Heart left ventricle (tissue), 16 donors: ENCODE measurements at regions of chr21 and their contacts with region 1.

Region 1: GRCh38 chr21:42220138-42220701 is 1.3 kb downstream of the ABCG1 start:
- DNase-seq: peak in 4 of 5 donors; percentile 56 to 74 (median 70)
- ATAC-seq: peak; percentile 70 to 86 (median 74)
- H3K4me3 ChIP-seq: peak overlapping the region; percentile 49 to 95 (median 78)
- H3K27ac ChIP-seq: peak overlapping the region; percentile 44 to 90 (median 83)
- H3K4me1 ChIP-seq: peaks cover 7 to 48% (median 28%) of the 10 kb centered on the region in 12 donors
- H3K27me3 ChIP-seq: no peaks in the 10 kb centered on the region
- CTCF ChIP-seq: no peak
- POLR2A ChIP-seq: no peak

Region 2: DNA sequence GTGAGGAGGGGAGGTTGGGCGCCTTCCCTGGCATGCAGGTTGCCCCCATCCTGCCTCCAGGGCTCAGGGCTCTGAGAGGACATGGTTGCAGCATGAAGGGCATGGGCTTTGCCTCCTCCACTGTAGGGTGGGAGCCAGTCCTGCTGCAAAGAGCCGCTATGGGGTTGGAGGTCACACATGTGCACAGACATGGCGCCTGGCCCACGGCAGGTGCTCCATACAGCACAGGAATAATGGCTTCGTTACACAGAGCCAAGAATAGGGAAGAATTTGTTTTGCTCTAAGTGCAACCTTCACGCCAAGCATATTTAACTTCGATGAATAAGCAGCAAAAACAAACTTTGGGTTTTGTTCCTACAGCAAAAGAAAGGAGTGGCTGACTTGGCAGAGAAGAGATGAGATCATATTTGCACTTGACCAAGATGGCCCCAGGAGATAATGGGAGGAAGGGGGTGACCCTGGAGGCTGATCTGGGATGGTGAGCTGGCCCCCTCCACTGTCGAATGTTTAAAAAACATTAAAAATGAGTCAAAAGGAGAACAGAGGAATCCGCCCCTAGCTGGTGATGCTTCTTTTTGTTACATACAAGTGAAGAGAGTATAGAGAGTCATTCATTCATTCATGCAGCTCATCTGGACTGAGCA is 254.1 kb before region 1 on chr21:
- intact Hi-C with region 1: no loop called
- DNase-seq: no peak
- ATAC-seq: no peak
- H3K4me3 ChIP-seq: no peak overlapping the region
- H3K27ac ChIP-seq: no peak overlapping the region
- H3K4me1 ChIP-seq: peaks cover 0 to 4% (median 0%) of the 10 kb centered on the region in 12 donors
- H3K27me3 ChIP-seq: peaks cover 0 to 5% (median 0%) of the 10 kb centered on the region in 9 donors
- CTCF ChIP-seq: no peak
- POLR2A ChIP-seq: no peak

Region 3: DNA sequence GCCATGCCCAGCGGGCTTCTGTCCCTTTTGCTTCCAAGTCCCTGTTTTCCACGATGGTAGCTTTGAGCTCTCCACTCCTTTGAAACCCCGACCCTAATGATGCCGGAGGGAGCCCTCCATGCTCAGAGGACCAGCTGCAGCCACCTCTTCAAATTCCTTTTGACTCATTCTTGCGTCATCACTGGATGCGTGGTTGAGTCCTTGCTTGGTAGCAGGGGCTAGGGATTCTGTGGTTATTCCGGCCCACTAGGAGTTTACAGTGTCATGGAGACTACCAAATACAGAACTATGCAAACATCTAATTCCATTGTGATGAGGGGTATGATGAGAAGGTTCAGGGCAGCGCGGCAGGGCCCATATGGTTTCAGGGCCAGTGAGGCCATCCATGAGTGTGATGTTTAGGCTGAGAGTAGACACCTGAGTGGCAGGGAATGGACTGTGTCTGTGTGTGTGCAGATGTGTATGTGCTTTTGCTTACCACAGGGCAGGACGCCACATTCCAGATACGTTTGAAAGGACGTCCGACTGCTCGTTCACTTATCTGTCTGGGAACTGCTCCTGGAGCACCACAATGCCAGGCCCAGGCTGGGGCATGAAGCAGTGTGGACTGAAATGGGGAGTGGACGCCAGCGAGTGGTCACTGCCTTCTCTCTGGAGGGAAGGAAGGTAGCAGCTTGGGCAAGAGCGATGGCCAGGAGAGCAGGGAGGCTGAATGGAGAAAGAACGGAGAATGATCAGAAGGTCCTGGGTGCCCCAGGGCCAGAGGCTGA is 179.6 kb before region 1 on chr21:
- intact Hi-C with region 1: no loop called
- DNase-seq: peak in 2 of 5 donors; percentile 46 to 59
- ATAC-seq: peak in 3 of 4 donors; percentile 58 to 89 (median 75)
- H3K4me3 ChIP-seq: no peak overlapping the region
- H3K27ac ChIP-seq: peak overlapping the region in 6 of 12 donors; percentile 19 to 61 (median 34)
- H3K4me1 ChIP-seq: peaks cover 0 to 18% (median 2%) of the 10 kb centered on the region in 12 donors
- H3K27me3 ChIP-seq: no peaks in the 10 kb centered on the region
- CTCF ChIP-seq: no peak
- POLR2A ChIP-seq: no peak

Region 4: GRCh38 chr21:42171091-42172053 is 48.8 kb before region 1 on chr21:
- intact Hi-C with region 1: loop called in 7 of 10 experiments (anchors 5 to 10 kb)
- DNase-seq: peak; percentile 67 to 81 (median 71)
- ATAC-seq: peak; percentile 85 to 92 (median 86)
- H3K4me3 ChIP-seq: no peak overlapping the region
- H3K27ac ChIP-seq: peak overlapping the region in 10 of 12 donors; percentile 1 to 50 (median 35)
- H3K4me1 ChIP-seq: peaks cover 0 to 15% (median 0%) of the 10 kb centered on the region in 12 donors
- H3K27me3 ChIP-seq: no peaks in the 10 kb centered on the region
- CTCF ChIP-seq: no peak
- POLR2A ChIP-seq: no peak

Region 5: DNA sequence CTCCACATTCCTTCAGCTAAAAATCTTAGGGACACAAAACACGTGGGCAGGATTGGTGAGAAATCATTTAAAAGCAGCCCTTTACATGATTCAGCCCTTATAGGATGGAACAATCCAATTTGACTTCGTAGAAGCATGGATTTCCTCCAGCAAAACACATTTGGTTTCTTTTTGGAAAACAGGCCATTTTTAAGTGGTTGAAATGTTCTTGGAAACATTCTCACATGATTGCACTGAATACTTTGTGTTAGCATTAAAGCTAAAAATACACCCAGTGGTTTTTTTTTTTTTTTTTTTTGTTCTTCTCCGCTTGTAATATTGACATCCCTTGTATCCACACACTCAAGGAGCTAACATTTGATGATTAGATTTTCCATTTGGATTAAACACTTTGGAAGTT is 43.4 kb before region 1 on chr21:
- intact Hi-C with region 1: loop called in 4 of 10 experiments (anchors 5 kb)
- DNase-seq: no peak
- ATAC-seq: no peak
- H3K4me3 ChIP-seq: no peak overlapping the region
- H3K27ac ChIP-seq: no peak overlapping the region
- H3K4me1 ChIP-seq: peaks cover 0 to 8% (median 0%) of the 10 kb centered on the region in 12 donors
- H3K27me3 ChIP-seq: no peaks in the 10 kb centered on the region
- CTCF ChIP-seq: no peak
- POLR2A ChIP-seq: no peak

Region 6: GRCh38 chr21:42187976-42188653 is 32.1 kb before region 1 on chr21:
- intact Hi-C with region 1: loop called in 1 of 10 experiments (anchors 1 kb)
- DNase-seq: peak in 4 of 5 donors; percentile 44 to 60 (median 56)
- ATAC-seq: peak; percentile 55 to 91 (median 77)
- H3K4me3 ChIP-seq: peak overlapping the region in 1 of 12 donors; percentile 9
- H3K27ac ChIP-seq: peak overlapping the region in 11 of 12 donors; percentile 2 to 93 (median 57)
- H3K4me1 ChIP-seq: peaks cover 0 to 65% (median 5%) of the 10 kb centered on the region in 12 donors
- H3K27me3 ChIP-seq: no peaks in the 10 kb centered on the region
- CTCF ChIP-seq: no peak
- POLR2A ChIP-seq: no peak